CD8-positive, alpha-beta T cell (primary cell): ENCODE measurements at regions of chr2 and their contacts with region 1.

Region 1: DNA sequence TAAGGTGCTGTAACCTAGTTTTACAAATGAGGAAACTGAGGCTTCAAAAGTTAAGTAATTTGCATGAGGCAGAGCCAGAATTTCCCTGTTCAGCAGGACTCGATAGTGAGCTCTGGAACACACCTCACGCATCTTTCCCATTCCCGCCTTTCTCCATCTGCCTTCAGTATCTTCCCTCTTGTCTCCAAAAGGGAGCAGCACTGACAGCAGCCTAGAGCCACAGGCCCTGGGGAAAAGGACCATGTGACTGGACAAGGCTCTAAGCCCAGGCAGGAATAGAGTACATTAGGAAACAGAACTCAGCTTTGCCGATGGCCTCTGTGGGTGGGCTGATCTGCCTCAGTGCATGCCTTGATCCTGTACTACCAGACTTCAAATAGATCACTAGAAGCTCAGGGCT is 21.5 kb downstream of the GPR155 start:
- DNase-seq: no peak
- ATAC-seq: no peak
- H3K4me3 ChIP-seq: no peak overlapping the region
- H3K4me3 Mint-ChIP-seq: no peak overlapping the region
- H3K27ac ChIP-seq: no peak overlapping the region
- H3K27ac Mint-ChIP-seq: no peak overlapping the region
- H3K4me1 ChIP-seq: no peaks in the 10 kb centered on the region
- H3K4me1 Mint-ChIP-seq: peaks cover 1% of the 10 kb centered on the region
- H3K27me3 ChIP-seq: no peaks in the 10 kb centered on the region
- H3K27me3 Mint-ChIP-seq: no peaks in the 10 kb centered on the region
- CTCF ChIP-seq: no peak

Region 2: DNA sequence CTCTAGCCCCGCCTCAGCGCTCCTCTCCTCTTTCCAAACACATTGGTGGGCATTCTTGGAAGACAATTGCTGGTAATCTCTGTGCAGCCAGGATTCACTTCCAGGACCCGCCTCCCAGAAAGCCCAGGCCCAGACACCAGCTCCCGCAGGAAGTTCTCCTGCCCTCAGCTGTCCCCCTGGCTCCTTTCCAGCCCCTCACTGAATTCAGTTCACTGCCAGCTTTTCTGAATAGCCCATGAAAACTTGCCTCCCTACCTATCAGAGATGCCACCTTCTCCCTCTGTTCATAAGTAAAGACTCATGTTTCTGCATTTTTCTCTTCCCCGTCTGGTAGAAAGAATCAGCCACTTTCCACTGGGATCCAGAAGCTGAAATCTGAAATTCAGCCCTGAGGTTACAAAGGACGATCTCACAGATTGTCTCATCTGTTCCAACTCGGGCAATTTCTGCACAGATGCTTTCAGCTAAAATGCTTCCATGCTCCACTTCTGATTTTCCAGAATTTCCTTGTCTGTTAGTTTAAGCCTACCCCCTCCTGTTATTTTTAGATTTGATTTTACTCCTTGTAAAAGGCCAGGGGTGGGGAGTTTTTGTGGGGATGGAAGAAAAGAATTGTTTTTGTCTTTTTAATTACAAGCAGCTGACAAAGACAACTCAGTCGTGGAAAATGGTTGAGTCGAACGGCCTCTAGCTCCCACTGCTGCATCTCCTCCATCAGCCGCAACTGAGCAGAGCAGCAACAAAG is 598.3 kb before region 1 on chr2:
- CTCF ChIA-PET with region 1: no interaction called
- POLR2A ChIA-PET with region 1: no interaction called
- intact Hi-C with region 1: no loop called
- DNase-seq: no peak
- ATAC-seq: no peak
- H3K4me3 ChIP-seq: no peak overlapping the region
- H3K4me3 Mint-ChIP-seq: no peak overlapping the region
- H3K27ac ChIP-seq: no peak overlapping the region
- H3K27ac Mint-ChIP-seq: no peak overlapping the region
- H3K4me1 ChIP-seq: no peaks in the 10 kb centered on the region
- H3K4me1 Mint-ChIP-seq: no peaks in the 10 kb centered on the region
- H3K27me3 ChIP-seq: no peaks in the 10 kb centered on the region
- H3K27me3 Mint-ChIP-seq: peaks cover 2% of the 10 kb centered on the region
- CTCF ChIP-seq: no peak

Region 3: DNA sequence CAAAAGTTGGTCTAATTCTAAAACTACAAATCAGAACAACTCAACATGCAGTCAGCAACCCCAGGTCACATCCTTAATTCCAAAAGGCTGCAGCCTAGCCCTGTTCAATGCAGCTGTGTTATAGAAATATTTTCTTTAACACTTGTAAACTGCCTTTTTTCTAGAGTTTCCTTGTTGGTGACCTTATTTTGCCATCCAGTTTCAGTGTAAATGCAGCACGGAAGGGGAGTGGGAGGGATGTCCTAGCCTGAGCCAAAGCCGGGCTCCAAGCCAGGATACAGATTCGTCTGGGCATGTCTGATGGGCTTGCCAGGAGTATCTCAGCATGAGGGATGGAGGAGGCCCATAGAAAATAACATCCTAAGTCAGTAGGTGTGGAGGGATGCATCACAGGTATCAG is 482.4 kb before region 1 on chr2:
- CTCF ChIA-PET with region 1: no interaction called
- POLR2A ChIA-PET with region 1: no interaction called
- intact Hi-C with region 1: no loop called
- DNase-seq: no peak
- ATAC-seq: no peak
- H3K4me3 ChIP-seq: no peak overlapping the region
- H3K4me3 Mint-ChIP-seq: no peak overlapping the region
- H3K27ac ChIP-seq: no peak overlapping the region
- H3K27ac Mint-ChIP-seq: no peak overlapping the region
- H3K4me1 ChIP-seq: no peaks in the 10 kb centered on the region
- H3K4me1 Mint-ChIP-seq: peaks cover 6% of the 10 kb centered on the region
- H3K27me3 ChIP-seq: no peaks in the 10 kb centered on the region
- H3K27me3 Mint-ChIP-seq: peaks cover 9% of the 10 kb centered on the region
- CTCF ChIP-seq: no peak

Region 4: GRCh38 chr2:174059178-174059874 is 406.0 kb before region 1 on chr2:
- CTCF ChIA-PET with region 1: no interaction called
- POLR2A ChIA-PET with region 1: no interaction called
- intact Hi-C with region 1: no loop called
- DNase-seq: no peak
- ATAC-seq: no peak
- H3K4me3 ChIP-seq: no peak overlapping the region
- H3K4me3 Mint-ChIP-seq: no peak overlapping the region
- H3K27ac ChIP-seq: no peak overlapping the region
- H3K27ac Mint-ChIP-seq: no peak overlapping the region
- H3K4me1 ChIP-seq: no peaks in the 10 kb centered on the region
- H3K4me1 Mint-ChIP-seq: no peaks in the 10 kb centered on the region
- H3K27me3 ChIP-seq: no peaks in the 10 kb centered on the region
- H3K27me3 Mint-ChIP-seq: peaks cover 24% of the 10 kb centered on the region
- CTCF ChIP-seq: no peak

Region 5: DNA sequence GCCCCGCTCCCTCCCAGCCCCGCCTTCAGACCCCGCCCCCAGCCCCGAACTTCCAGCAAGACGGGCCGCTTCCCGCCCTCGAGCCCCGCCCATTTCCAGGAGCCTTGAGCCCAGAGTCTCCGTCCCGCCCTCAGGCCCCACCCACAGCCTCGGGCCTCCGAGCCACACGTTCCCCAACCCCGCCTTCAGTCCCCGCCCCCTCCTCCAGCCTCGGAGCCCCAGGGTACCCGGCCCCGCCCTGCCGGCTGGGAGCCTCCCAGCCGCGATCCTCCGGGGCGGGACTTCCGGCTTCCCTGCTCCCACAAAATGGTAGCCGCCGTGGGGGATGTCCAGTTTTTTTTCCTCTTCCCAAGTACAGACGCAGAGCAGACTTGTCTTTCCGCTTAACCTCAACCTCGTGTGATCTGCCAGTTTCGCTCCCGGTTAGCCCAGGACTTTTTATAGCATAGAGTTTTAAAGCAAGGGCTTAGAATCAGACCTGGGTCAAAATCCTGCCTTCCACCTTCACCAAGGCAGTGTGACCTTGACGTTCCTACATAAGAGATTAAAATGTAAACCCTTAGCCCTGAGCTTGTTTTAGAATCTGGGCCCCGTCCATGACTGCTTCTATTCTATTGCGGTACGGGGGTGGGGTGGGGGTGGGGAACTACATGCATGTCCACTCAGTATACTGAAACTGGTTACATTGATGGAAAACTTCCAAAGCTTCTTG is 21.9 kb after region 1 on chr2:
- CTCF ChIA-PET with region 1: interaction called, 45 read pairs
- POLR2A ChIA-PET with region 1: interaction called, 7 read pairs
- intact Hi-C with region 1: loop called in 1 of 2 experiments (anchors 2 kb)
- DNase-seq: peak; percentile 77 to 98 (median 97)
- ATAC-seq: peak; percentile 74
- H3K4me3 ChIP-seq: peak overlapping the region; percentile 83 to 86
- H3K4me3 Mint-ChIP-seq: peak overlapping the region; percentile 97
- H3K27ac ChIP-seq: peak overlapping the region; percentile 69 to 85
- H3K27ac Mint-ChIP-seq: peak overlapping the region; percentile 88
- H3K4me1 ChIP-seq: peaks cover 59% of the 10 kb centered on the region
- H3K4me1 Mint-ChIP-seq: peaks cover 73% of the 10 kb centered on the region
- H3K27me3 ChIP-seq: no peaks in the 10 kb centered on the region
- H3K27me3 Mint-ChIP-seq: no peaks in the 10 kb centered on the region
- CTCF ChIP-seq: no peak

Region 6: GRCh38 chr2:174516501-174517378 is 51.4 kb after region 1 on chr2:
- CTCF ChIA-PET with region 1: interaction called, 89 read pairs
- POLR2A ChIA-PET with region 1: interaction called, 7 read pairs
- intact Hi-C with region 1: no loop called
- DNase-seq: no peak
- ATAC-seq: no peak
- H3K4me3 ChIP-seq: no peak overlapping the region
- H3K4me3 Mint-ChIP-seq: no peak overlapping the region
- H3K27ac ChIP-seq: no peak overlapping the region
- H3K27ac Mint-ChIP-seq: no peak overlapping the region
- H3K4me1 ChIP-seq: peaks cover 15% of the 10 kb centered on the region
- H3K4me1 Mint-ChIP-seq: peaks cover 15% of the 10 kb centered on the region
- H3K27me3 ChIP-seq: no peaks in the 10 kb centered on the region
- H3K27me3 Mint-ChIP-seq: no peaks in the 10 kb centered on the region
- CTCF ChIP-seq: no peak

Region 7: GRCh38 chr2:174553811-174554493 is 88.6 kb after region 1 on chr2:
- CTCF ChIA-PET with region 1: interaction called, 21 read pairs
- POLR2A ChIA-PET with region 1: interaction called, 7 read pairs
- intact Hi-C with region 1: loop called in 1 of 2 experiments (anchors 5 kb)
- DNase-seq: peak in 6 of 9 experiments; percentile 15 to 63 (median 32)
- ATAC-seq: peak; percentile 47
- H3K4me3 ChIP-seq: peak overlapping the region in 1 of 2 experiments; percentile 4
- H3K4me3 Mint-ChIP-seq: peak overlapping the region; percentile 40
- H3K27ac ChIP-seq: peak overlapping the region; percentile 0 to 63
- H3K27ac Mint-ChIP-seq: peak overlapping the region; percentile 88
- H3K4me1 ChIP-seq: peaks cover 35% of the 10 kb centered on the region
- H3K4me1 Mint-ChIP-seq: peaks cover 47% of the 10 kb centered on the region
- H3K27me3 ChIP-seq: no peaks in the 10 kb centered on the region
- H3K27me3 Mint-ChIP-seq: no peaks in the 10 kb centered on the region
- CTCF ChIP-seq: no peak

Region 8: GRCh38 chr2:174585146-174585954 is 120.0 kb after region 1 on chr2:
- CTCF ChIA-PET with region 1: interaction called, 22 read pairs
- POLR2A ChIA-PET with region 1: no interaction called
- intact Hi-C with region 1: no loop called
- DNase-seq: peak in 1 of 9 experiments; percentile 46
- ATAC-seq: no peak
- H3K4me3 ChIP-seq: no peak overlapping the region
- H3K4me3 Mint-ChIP-seq: peak overlapping the region; percentile 51
- H3K27ac ChIP-seq: peak overlapping the region in 1 of 2 experiments; percentile 91
- H3K27ac Mint-ChIP-seq: peak overlapping the region; percentile 95
- H3K4me1 ChIP-seq: peaks cover 92% of the 10 kb centered on the region
- H3K4me1 Mint-ChIP-seq: peaks cover 94% of the 10 kb centered on the region
- H3K27me3 ChIP-seq: no peaks in the 10 kb centered on the region
- H3K27me3 Mint-ChIP-seq: no peaks in the 10 kb centered on the region
- CTCF ChIP-seq: no peak

Region 9: DNA sequence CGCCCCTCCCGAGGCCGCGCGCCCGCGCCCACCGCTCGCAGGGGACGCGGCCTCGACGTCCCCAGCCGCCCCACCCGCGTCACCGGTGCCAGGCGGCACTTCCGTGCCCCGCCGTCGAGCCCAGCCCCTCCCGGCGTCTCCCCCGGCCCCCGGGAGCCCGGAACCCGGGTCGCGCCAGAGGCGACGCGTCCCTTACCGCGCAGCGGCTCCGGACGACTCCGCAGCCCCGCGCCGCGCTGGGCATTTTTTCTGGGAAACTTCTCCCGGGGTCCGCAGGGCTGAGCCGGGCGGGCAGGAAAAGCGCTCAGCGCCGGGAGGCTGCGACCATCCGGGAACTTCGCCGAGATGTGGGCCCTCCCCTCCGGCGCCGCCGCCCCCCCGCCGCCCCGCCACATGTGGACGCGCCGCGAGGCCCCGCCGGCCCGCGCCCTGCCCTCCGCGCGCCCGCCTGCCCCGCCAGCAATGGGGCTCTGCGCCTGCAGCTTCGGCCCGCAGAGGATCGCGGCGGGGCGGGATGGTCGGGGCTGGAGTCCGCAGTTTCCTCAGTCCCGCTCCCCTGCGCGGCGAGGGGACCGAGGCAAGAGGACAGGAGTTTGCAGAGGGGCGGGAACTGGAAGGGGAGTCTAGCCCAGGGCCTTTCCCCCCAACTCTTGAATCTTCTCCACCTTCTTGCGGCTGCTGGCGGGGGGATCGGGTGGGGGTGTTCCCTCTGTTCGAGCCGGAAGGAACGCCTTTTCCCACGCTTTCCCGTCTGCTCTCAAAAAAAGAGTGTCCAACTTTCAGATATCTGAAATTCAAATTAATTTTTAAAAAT is 217.5 kb after region 1 on chr2:
- CTCF ChIA-PET with region 1: interaction called, 107 read pairs
- POLR2A ChIA-PET with region 1: no interaction called
- intact Hi-C with region 1: loop called in 1 of 2 experiments (anchors 1 kb)
- DNase-seq: peak; percentile 33 to 83 (median 67)
- ATAC-seq: peak; percentile 74
- H3K4me3 ChIP-seq: peak overlapping the region; percentile 73 to 81
- H3K4me3 Mint-ChIP-seq: peak overlapping the region; percentile 91
- H3K27ac ChIP-seq: peak overlapping the region; percentile 41 to 70
- H3K27ac Mint-ChIP-seq: peak overlapping the region; percentile 93
- H3K4me1 ChIP-seq: peaks cover 35% of the 10 kb centered on the region
- H3K4me1 Mint-ChIP-seq: peaks cover 55% of the 10 kb centered on the region
- H3K27me3 ChIP-seq: no peaks in the 10 kb centered on the region
- H3K27me3 Mint-ChIP-seq: no peaks in the 10 kb centered on the region
- CTCF ChIP-seq: no peak